ENCODE measurements at regions of chr1 and their contacts with region 1.

Region 1: DNA sequence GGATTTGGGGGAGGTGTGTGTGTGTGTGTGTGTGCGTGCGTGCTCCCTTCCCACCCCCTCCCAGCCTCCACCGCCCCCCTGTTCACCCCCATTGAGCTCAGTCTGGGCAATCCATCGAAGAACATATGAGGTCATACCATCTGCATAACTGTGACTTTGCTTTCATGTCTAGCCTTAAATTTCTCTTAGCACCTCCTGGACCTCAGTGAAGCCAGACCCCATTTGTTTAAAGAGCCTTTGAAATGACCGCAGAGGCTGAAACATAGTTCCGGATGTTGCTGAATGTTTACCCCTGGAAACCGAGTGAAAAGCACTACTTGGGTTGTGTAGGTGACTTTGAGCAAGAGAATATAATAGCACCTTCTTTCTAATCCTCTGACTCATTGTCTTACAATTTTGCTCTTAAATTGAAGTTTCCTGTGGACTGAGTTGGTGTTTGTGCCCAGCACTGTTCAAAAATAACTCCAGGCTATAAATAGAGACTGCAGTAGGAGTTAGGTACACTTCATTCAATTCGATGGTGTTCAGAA is 75.4 kb downstream of the UBE4B start:
- DNase-seq: no peak
- ATAC-seq: peak; percentile 74 to 79
- H3K4me3 ChIP-seq: peak overlapping the region in 2 of 4 donors; percentile 8 to 29
- H3K27ac ChIP-seq: peak overlapping the region; percentile 79 to 90 (median 87)
- H3K4me1 ChIP-seq: peaks cover 28 to 36% of the 10 kb centered on the region in 2 donors
- H3K27me3 ChIP-seq: no peaks in the 10 kb centered on the region
- CTCF ChIP-seq: no peak
- POLR2A ChIP-seq: no peak

Region 2: DNA sequence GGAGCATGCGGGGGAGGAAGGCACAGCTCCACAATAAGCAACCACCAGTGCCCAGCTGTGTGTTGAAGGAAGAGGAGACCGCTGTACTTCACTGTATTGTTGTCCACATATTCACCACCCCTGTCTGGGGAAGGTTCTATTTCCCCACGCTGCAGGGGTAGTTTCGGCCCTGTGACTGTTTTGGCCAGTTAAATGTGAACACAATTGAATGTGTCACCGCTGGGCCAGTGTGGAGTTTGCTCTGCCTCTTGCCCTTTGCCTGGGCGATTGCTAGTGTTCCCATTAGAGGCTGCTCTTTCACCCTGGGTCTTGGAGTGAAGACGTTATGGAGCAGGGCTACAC is 42.9 kb before region 1 on chr1:
- in situ Hi-C with region 1: no loop called
- intact Hi-C with region 1: loop called (anchors 5 kb)
- DNase-seq: peak in 1 of 2 donors; percentile 19
- ATAC-seq: peak in 1 of 2 donors; percentile 35
- H3K4me3 ChIP-seq: no peak overlapping the region
- H3K27ac ChIP-seq: peak overlapping the region; percentile 58 to 84 (median 82)
- H3K4me1 ChIP-seq: peaks cover 38 to 50% of the 10 kb centered on the region in 2 donors
- H3K27me3 ChIP-seq: no peaks in the 10 kb centered on the region
- CTCF ChIP-seq: no peak
- POLR2A ChIP-seq: no peak

Region 3: DNA sequence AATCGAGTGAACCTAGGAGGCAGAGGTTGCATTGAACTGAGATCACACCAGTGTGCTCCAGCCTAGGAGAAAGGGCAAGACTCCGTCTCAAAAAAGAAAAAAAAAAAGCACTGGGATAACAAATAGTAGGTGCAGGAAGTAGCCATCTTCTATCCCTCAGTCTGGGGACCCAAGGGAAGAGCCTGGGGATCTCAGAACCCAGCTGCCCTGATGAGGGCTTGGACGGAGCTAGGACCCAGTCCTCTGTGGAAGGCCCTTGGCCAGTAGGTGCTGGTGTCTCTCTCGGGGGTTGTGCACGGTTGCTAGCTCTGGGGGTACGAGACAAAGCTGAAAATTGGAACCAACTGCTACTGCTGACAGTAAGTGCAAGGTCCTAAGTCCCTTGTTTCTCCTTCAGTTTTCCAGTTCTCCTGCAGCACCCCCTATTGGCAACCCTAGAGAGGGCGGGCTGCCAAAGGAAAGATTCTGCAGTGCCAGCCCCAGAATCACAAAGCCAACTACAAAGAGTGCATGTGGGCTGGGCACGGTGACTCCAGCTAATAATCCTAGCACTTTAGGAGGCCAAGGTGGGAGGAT is 44.6 kb after region 1 on chr1:
- in situ Hi-C with region 1: no loop called
- intact Hi-C with region 1: loop called (anchors 5 kb)
- DNase-seq: peak in 1 of 2 donors; percentile 39
- ATAC-seq: no peak
- H3K4me3 ChIP-seq: no peak overlapping the region
- H3K27ac ChIP-seq: peak overlapping the region; percentile 77 to 90 (median 86)
- H3K4me1 ChIP-seq: peaks cover 16 to 37% of the 10 kb centered on the region in 2 donors
- H3K27me3 ChIP-seq: no peaks in the 10 kb centered on the region
- CTCF ChIP-seq: peak in 4 of 5 experiments; percentile 26 to 64 (median 42)
- POLR2A ChIP-seq: no peak

Measured in gastrocnemius medialis (tissue), 4 donors.